ENCODE measurements at regions of chr13 and their contacts with region 1.

Region 1: GRCh38 chr13:46587807-46588418 is 34.9 kb downstream of the LRCH1 start:
- DNase-seq: no peak
- ATAC-seq: peak; percentile 79
- H3K4me3 ChIP-seq: 0 out of 2 replicates have a peak overlapping the region, but pooled peaks have one; percentile 7
- H3K27ac ChIP-seq: peak overlapping the region; percentile 29
- H3K4me1 ChIP-seq: peaks cover 58% of the 10 kb centered on the region
- H3K27me3 ChIP-seq: no peaks in the 10 kb centered on the region
- CTCF ChIP-seq: no peak
- EP300 ChIP-seq: peak in 1 of 2 experiments; percentile 56; a peak in 2 of 4 replicates
- POLR2A ChIP-seq: no peak
- RAD21 ChIP-seq: no peak

Region 2: GRCh38 chr13:46468570-46469463 is 119.1 kb before region 1 on chr13:
- CTCF ChIA-PET with region 1: no interaction called
- POLR2A ChIA-PET with region 1: no interaction called
- RAD21 ChIA-PET with region 1: no interaction called
- SMC1A ChIA-PET with region 1: no interaction called
- in situ Hi-C with region 1: no loop called
- intact Hi-C with region 1: no loop called
- DNase-seq: no peak
- ATAC-seq: no peak
- H3K4me3 ChIP-seq: no peak overlapping the region
- H3K27ac ChIP-seq: no peak overlapping the region
- H3K4me1 ChIP-seq: no peaks in the 10 kb centered on the region
- H3K27me3 ChIP-seq: no peaks in the 10 kb centered on the region
- CTCF ChIP-seq: no peak
- EP300 ChIP-seq: no peak
- POLR2A ChIP-seq: no peak
- RAD21 ChIP-seq: no peak

Region 3: DNA sequence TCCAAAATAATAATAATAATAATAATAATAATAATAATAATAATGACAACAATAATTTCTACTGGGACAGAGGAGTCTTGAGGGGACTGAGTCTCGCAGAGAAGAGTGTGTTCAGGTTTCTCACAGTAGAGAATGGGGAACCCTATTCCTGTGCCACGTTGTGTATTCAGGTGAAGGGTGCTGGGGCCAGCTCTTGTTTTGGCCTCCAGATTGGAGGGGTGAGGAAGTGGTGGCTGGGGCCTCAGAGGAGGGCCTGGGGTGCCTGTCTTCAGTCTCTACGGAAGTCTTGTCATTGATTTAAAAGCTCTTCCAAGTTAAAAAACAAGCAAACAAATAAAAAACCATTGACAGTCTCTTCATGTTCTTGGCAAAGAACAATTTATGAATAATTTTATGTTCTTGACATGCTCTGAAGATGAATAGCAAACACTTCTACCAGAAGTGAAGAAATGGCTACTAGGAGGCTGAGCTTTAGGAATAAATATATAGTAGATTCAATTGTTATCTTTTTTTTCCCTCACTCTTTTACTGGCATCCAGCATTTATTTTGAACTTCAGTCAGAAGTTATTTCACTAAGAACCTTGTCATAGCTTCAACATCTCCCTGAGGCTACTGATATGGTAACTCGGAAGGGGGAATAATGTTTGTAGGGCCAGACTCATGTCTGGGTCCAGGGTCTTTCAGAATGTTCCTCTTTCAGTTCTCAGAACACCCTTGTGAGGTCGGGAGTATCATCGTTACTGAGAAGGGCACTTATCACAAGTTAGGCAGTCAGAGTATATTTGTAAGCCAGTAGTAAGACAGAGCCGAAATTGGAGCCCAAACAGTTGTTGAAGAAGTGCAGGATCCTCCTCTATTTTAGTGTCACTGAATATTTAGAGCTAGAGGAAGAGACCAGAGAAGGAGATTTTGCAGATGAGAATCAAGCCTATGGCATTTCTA is 21.8 kb before region 1 on chr13:
- CTCF ChIA-PET with region 1: interaction called, 3 read pairs
- POLR2A ChIA-PET with region 1: interaction called, 3 read pairs
- RAD21 ChIA-PET with region 1: interaction called, 17 read pairs
- SMC1A ChIA-PET with region 1: interaction called, 35 read pairs
- in situ Hi-C with region 1: no loop called
- intact Hi-C with region 1: no loop called
- DNase-seq: no peak
- ATAC-seq: peak; percentile 85
- H3K4me3 ChIP-seq: peak overlapping the region; percentile 4; the same call in 1 of the 2 replicates
- H3K27ac ChIP-seq: peak overlapping the region; percentile 7
- H3K4me1 ChIP-seq: peaks cover 24% of the 10 kb centered on the region
- H3K27me3 ChIP-seq: no peaks in the 10 kb centered on the region
- CTCF ChIP-seq: no peak
- EP300 ChIP-seq: no peak
- POLR2A ChIP-seq: no peak
- RAD21 ChIP-seq: no peak

Region 4: GRCh38 chr13:46617229-46617788 is 29.4 kb after region 1 on chr13:
- CTCF ChIA-PET with region 1: interaction called, 5 read pairs
- POLR2A ChIA-PET with region 1: interaction called, 5 read pairs
- RAD21 ChIA-PET with region 1: interaction called, 3 read pairs
- SMC1A ChIA-PET with region 1: interaction called, 367 read pairs
- in situ Hi-C with region 1: no loop called
- intact Hi-C with region 1: no loop called
- DNase-seq: no peak
- ATAC-seq: no peak
- H3K4me3 ChIP-seq: no peak overlapping the region
- H3K27ac ChIP-seq: no peak overlapping the region
- H3K4me1 ChIP-seq: peaks cover 49% of the 10 kb centered on the region
- H3K27me3 ChIP-seq: no peaks in the 10 kb centered on the region
- CTCF ChIP-seq: no peak
- EP300 ChIP-seq: no peak
- POLR2A ChIP-seq: no peak
- RAD21 ChIP-seq: no peak

Measured in GM12878 (cell line).